ENCODE measurements at regions of chr2 and their contacts with region 1.

Region 1: DNA sequence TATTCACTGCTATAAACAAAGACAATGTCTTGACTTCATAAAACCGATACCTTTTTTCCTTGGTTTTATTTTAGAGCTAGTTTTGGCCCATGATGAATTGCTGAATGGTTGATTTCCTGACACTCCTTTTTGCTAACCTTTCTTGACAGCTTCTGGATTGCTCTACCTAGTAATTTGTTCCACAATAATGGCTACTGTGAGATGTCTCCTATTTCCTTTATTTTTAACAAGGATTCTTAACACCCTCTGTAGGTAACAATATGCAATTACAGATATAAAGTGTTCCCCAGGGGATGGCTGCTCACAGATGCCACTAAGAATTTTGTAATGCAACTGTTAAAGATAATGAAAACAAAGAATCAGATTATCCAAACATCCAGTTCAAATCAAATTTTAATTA is 100.8 kb upstream of the ATP5MC3 start:
- DNase-seq: no peak

Region 2: GRCh38 chr2:175111200-175111657 is 171.1 kb before region 1 on chr2:
- intact Hi-C with region 1: loop called (anchors 5 kb)
- DNase-seq: no peak

Region 3: DNA sequence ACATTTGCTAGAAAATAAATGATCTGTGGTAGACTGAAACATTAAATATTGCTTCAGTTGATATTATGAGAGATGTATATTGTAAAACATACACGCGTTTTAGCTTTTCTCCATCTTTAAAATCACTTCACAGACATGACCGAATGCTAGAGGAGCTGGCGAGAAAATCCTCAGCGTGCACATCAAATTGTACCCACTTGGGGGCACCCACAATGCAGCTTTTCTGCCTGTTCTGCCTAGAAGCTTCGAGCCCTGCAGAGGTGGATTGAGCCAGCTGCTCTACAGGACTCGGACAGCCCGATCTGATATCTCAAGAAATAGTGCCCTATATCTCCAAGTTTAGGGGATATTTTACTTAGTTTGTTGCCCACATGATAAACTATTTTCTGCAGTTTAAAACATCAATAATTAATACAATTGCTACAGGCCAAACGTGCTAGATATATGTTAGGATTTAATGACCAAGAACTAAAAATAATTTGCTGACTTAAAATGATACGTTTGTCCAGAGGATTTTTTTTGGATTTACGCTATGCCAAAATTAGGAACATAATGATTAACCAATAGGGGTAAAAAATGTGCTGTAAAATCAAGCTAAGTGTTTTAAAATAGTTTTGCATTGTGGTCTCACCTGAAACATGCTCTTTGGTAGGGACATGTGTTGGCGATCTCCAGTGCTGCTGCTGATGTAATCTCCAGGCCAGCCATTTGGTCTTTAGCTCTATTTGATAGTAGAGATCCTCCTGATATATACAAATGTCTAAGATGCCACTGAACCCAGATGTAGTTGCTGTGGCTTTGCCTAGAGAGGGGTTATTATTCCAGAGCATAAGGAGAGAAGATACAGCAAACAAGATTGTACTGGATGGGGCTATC is 78.4 kb before region 1 on chr2:
- intact Hi-C with region 1: loop called (anchors 5 kb)
- DNase-seq: no peak

Measured in cardiac septum (tissue), 1 donor.